Activated naive CD8-positive, alpha-beta T cell treated with anti-CD3 and anti-CD28 coated beads, Interleukin-2, amount 10 ng/mL, durations not matched to agents 7 days and 5 days (primary cell): ENCODE measurements at regions of chr2 and their contacts with region 1.

Region 1: GRCh38 chr2:112692496-112692911 is 28.3 kb upstream of the NT5DC4 start:
- DNase-seq: peak; percentile 57
- ATAC-seq: peak; percentile 88
- H3K4me3 Mint-ChIP-seq: peak overlapping the region; percentile 54
- H3K27ac Mint-ChIP-seq: peak overlapping the region; percentile 39
- H3K4me1 Mint-ChIP-seq: peaks cover 23% of the 10 kb centered on the region
- H3K27me3 Mint-ChIP-seq: peaks cover 21% of the 10 kb centered on the region

Region 2: GRCh38 chr2:112706170-112706664 is 13.7 kb after region 1 on chr2:
- POLR2A ChIA-PET with region 1: interaction called, 18 read pairs
- DNase-seq: peak; percentile 82
- ATAC-seq: peak; percentile 98
- H3K4me3 Mint-ChIP-seq: peak overlapping the region; percentile 69
- H3K27ac Mint-ChIP-seq: peak overlapping the region; percentile 2
- H3K4me1 Mint-ChIP-seq: peaks cover 37% of the 10 kb centered on the region
- H3K27me3 Mint-ChIP-seq: peaks cover 50% of the 10 kb centered on the region